ENCODE measurements at regions of chr11 and their contacts with region 1.

Region 1: GRCh38 chr11:5684646-5685362 is at the start of gene TRIM5:
- DNase-seq: peak; percentile 94 to 97
- ATAC-seq: peak; percentile 99
- H3K4me3 ChIP-seq: peak within 1 kb of the TSS; percentile 47
- H3K27ac ChIP-seq: peak within 1 kb of the TSS; percentile 88 to 90
- H3K4me1 ChIP-seq: peaks cover 15% of the 10 kb centered on the region; the same call in 2 of the 3 replicates
- CTCF ChIP-seq: peak; percentile 72
- EP300 ChIP-seq: no peak
- POLR2A ChIP-seq: peak; percentile 54
- RAD21 ChIP-seq: peak; percentile 63 to 67
- polyA plus RNA-seq, gene TRIM5: 30.5 and 32.6 TPM in 2 replicates

Region 2: DNA sequence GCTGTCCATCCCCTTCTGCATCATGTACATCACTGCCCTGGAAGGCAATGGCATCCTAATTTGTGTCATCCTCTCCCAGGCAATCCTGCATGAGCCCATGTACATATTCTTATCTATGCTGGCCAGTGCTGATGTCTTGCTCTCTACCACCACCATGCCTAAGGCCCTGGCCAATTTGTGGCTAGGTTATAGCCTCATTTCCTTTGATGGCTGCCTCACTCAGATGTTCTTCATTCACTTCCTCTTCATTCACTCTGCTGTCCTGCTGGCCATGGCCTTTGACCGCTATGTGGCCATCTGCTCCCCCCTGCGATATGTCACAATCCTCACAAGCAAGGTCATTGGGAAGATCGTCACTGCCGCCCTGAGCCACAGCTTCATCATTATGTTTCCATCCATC is 103.8 kb before region 1 on chr11:
- CTCF ChIA-PET with region 1: no interaction called
- POLR2A ChIA-PET with region 1: no interaction called
- DNase-seq: no peak
- ATAC-seq: no peak
- H3K4me3 ChIP-seq: no peak overlapping the region
- H3K27ac ChIP-seq: no peak overlapping the region
- H3K4me1 ChIP-seq: no peaks in the 10 kb centered on the region
- CTCF ChIP-seq: no peak
- EP300 ChIP-seq: no peak
- POLR2A ChIP-seq: no peak
- RAD21 ChIP-seq: no peak

Region 3: GRCh38 chr11:5611627-5612026 is 73.2 kb before region 1 on chr11:
- CTCF ChIA-PET with region 1: interaction called, 14 read pairs
- POLR2A ChIA-PET with region 1: no interaction called
- DNase-seq: peak in 1 of 2 experiments; percentile 38
- ATAC-seq: peak; percentile 73 to 86; a peak in 5 of 6 replicates
- H3K4me3 ChIP-seq: no peak overlapping the region
- H3K27ac ChIP-seq: no peak overlapping the region
- H3K4me1 ChIP-seq: peaks cover 7% of the 10 kb centered on the region; the same call in 1 of the 3 replicates
- CTCF ChIP-seq: peak; percentile 38
- EP300 ChIP-seq: no peak
- POLR2A ChIP-seq: no peak
- RAD21 ChIP-seq: peak in 1 of 2 experiments; percentile 38; a peak in 3 of 5 replicates

Region 4: GRCh38 chr11:5620646-5621521 is 63.9 kb before region 1 on chr11:
- CTCF ChIA-PET with region 1: interaction called, 10 read pairs
- POLR2A ChIA-PET with region 1: interaction called, 26 read pairs
- DNase-seq: peak; percentile 80 to 91
- ATAC-seq: peak; percentile 90 to 92
- H3K4me3 ChIP-seq: peak overlapping the region; percentile 17; the same call in 2 of the 3 replicates
- H3K27ac ChIP-seq: peak overlapping the region; percentile 79 to 91
- H3K4me1 ChIP-seq: peaks cover 58% of the 10 kb centered on the region
- CTCF ChIP-seq: no peak
- EP300 ChIP-seq: peak in 1 of 2 experiments; percentile 46; a peak in 1 of 5 replicates
- POLR2A ChIP-seq: no peak
- RAD21 ChIP-seq: no peak; a peak in 1 of 5 replicates

Region 5: GRCh38 chr11:6012035-6012668 is 327.3 kb after region 1 on chr11:
- CTCF ChIA-PET with region 1: no interaction called
- POLR2A ChIA-PET with region 1: no interaction called
- DNase-seq: no peak
- ATAC-seq: peak in 1 of 2 experiments; percentile 8; a peak in 1 of 6 replicates
- H3K4me3 ChIP-seq: no peak overlapping the region
- H3K27ac ChIP-seq: no peak overlapping the region
- H3K4me1 ChIP-seq: no peaks in the 10 kb centered on the region
- CTCF ChIP-seq: no peak
- EP300 ChIP-seq: no peak
- POLR2A ChIP-seq: no peak
- RAD21 ChIP-seq: no peak